HEK293 (cell line): ENCODE measurements at regions of chr15 and their contacts with region 1.

Region 1: GRCh38 chr15:48861813-48862431 is 16.0 kb upstream of the EID1 start:
- H3K4me3 ChIP-seq: no peak overlapping the region
- H3K27ac ChIP-seq: no peak overlapping the region
- H3K4me1 ChIP-seq: peaks cover 7% of the 10 kb centered on the region; the same call in 1 of the 2 replicates
- CTCF ChIP-seq: no peak

Region 2: DNA sequence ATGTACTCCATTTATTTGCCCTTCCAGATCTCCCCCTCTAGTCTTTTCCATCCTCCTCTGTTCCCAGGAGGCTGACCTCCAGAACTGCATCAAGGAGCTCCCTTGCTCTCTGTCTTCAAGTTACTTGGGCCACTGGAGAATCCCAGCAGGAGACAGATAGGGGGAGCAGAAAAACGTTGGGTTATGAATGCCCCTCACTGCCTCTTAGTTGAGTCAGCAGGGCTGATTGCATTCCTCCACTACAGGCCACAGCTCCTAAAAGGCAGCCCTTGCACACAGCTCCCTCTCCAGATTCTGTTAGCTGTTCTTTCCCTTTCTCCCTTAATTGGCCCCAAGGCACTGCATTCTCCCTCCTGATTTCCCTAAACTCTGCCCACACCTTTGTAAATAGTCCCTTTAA is 38.7 kb before region 1 on chr15:
- CTCF ChIA-PET with region 1: no interaction called
- POLR2A ChIA-PET with region 1: no interaction called
- H3K4me3 ChIP-seq: no peak overlapping the region
- H3K27ac ChIP-seq: no peak overlapping the region
- H3K4me1 ChIP-seq: no peaks in the 10 kb centered on the region
- CTCF ChIP-seq: 0 out of 2 replicates have a peak, but pooled peaks have one; percentile 17

Region 3: GRCh38 chr15:48842501-48842900 is 19.4 kb before region 1 on chr15:
- CTCF ChIA-PET with region 1: no interaction called
- POLR2A ChIA-PET with region 1: no interaction called
- H3K4me3 ChIP-seq: no peak overlapping the region
- H3K27ac ChIP-seq: no peak overlapping the region
- H3K4me1 ChIP-seq: no peaks in the 10 kb centered on the region
- CTCF ChIP-seq: no peak

Region 4: DNA sequence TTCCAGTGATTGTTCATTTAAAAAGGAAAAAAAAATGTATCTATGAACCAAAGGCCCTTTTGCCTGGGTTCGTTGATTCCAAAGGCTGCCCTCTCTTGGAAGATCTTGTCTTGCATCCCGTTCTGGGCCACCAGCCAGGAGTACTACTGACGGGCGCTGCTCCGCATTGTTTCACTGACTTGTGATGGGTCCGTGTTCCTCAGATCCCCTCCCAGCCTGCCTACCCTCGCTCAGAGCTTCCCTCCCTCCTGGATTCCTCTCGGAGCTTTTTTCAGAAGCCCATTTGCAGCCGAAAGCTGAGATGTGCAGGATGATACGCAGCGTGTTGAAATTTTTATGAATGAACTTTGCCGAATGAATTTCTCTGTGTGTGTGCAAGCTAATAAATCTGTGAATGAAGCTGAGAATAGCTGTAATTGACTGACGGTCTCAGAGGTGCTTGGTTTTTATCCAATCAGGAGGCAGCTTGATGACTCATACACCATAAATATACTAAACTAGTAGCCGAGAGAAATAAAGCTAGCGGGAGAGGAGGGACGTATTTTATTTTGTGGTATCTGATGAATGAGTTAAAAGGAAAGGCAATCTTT is 101.7 kb after region 1 on chr15 and contains the start of gene SHC4:
- CTCF ChIA-PET with region 1: interaction called, 19 read pairs
- POLR2A ChIA-PET with region 1: no interaction called
- H3K4me3 ChIP-seq: peak within 1 kb of the TSS; percentile 44
- H3K27ac ChIP-seq: peak within 1 kb of the TSS; percentile 49; the same call in 1 of the 2 replicates
- H3K4me1 ChIP-seq: no peaks in the 10 kb centered on the region
- CTCF ChIP-seq: no peak

Region 5: GRCh38 chr15:48975472-48976419 is 113.8 kb after region 1 on chr15:
- CTCF ChIA-PET with region 1: interaction called, 12 read pairs
- POLR2A ChIA-PET with region 1: interaction called, 3 read pairs
- H3K4me3 ChIP-seq: peak overlapping the region; percentile 41
- H3K27ac ChIP-seq: no peak overlapping the region
- H3K4me1 ChIP-seq: no peaks in the 10 kb centered on the region
- CTCF ChIP-seq: no peak

Region 6: DNA sequence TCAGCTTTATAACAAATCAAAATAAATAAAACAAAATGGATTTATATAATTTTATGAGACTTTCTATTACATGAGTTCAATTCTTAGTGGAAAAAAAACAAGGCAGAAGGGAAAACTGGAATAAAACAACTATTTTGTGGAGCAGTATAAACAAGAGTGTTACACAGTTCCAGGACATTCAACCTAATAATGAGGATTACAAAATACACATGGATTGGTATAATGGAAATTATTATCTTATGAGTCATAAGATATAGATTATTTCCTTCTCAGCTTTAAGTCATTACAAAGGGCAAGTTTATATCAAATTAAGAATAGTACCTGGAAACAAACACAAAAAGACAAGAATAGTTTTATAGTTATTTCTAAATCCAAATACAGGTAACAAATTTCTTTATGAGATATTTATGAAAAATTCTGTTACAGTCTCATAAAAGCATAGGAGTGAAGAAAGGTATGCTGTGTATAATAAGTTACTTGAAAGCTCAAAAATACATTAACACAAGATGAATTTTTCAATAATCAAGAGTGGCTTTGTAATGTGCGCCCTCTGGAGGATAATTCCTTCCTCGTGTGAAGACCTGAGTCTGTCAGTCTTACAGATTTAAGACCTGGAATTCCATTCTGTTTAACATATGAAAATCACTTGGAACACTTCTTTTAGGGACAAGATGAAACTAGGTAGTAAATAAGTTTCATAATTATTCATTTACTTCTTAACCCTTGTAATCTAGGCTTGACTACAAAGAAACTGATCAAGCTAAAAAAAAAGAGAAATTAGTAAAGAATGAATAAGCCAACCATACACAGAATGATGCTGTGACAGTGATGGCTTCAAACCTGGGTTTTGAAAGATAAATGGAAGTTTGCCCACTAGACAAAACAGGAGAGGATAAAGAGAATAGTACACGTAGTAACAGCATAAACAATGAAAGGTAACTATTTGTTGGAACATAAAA is 284.0 kb after region 1 on chr15:
- CTCF ChIA-PET with region 1: interaction called, 15 read pairs
- POLR2A ChIA-PET with region 1: no interaction called
- H3K4me3 ChIP-seq: no peak overlapping the region
- H3K27ac ChIP-seq: no peak overlapping the region
- H3K4me1 ChIP-seq: no peaks in the 10 kb centered on the region
- CTCF ChIP-seq: no peak

Region 7: DNA sequence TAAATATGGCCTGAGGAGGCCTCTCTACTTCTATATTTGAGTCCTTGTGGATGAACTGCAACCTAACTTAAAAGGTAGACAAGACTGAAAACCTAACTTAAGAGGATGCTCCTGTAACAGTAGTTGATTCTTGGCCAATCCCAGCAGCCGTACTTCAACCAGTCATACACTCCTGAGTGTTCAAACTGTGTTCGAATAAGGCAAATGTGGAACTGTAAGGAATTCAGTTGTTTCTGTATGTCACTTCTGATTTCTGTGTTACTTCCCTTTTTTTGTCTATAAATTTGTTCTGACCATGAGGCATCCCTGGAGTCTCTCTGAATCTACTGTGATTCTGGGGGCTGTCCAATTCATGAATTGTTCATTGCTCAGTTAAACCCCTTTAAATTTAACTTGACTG is 328.7 kb after region 1 on chr15:
- CTCF ChIA-PET with region 1: no interaction called
- POLR2A ChIA-PET with region 1: no interaction called
- H3K4me3 ChIP-seq: no peak overlapping the region
- H3K27ac ChIP-seq: no peak overlapping the region
- H3K4me1 ChIP-seq: 0 out of 2 replicates have a peak, but pooled peaks cover under 1% of the 10 kb centered on the region
- CTCF ChIP-seq: no peak

Region 8: DNA sequence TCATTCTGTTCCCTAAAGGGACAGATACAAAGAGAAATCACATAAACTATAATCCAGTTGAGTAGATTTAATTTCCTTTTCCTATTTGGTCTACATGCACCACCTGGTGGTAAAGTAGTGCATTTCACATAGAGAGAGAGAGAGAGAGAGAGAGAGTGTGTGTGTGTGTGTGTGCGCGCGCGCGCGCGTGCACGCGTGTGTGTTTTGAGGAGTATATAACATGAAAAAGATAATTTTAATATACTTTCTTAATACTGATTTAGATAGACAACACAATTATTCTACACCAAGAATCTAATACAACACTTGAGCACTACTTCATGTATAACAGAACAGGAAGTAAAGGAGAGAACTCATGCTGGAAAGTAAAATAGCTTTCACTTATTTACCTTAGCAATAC is 560.1 kb after region 1 on chr15:
- CTCF ChIA-PET with region 1: interaction called, 15 read pairs
- POLR2A ChIA-PET with region 1: no interaction called
- H3K4me3 ChIP-seq: no peak overlapping the region
- H3K27ac ChIP-seq: no peak overlapping the region
- H3K4me1 ChIP-seq: no peaks in the 10 kb centered on the region
- CTCF ChIP-seq: no peak